ENCODE measurements at regions of chr5 and their contacts with region 1.

Region 1: GRCh38 chr5:56909294-56910209 is at the start of gene SETD9:
- DNase-seq: peak; percentile 99
- H3K4me3 ChIP-seq: peak within 1 kb of the TSS; percentile 65 to 88 (median 73)
- H3K27ac ChIP-seq: peak within 1 kb of the TSS; percentile 96 to 99 (median 98)
- H3K4me1 ChIP-seq: peaks cover 11 to 17% (median 12%) of the 10 kb centered on the region in 4 donors
- H3K27me3 ChIP-seq: no peaks in the 10 kb centered on the region
- CTCF ChIP-seq: no peak
- EP300 ChIP-seq: no peak
- POLR2A ChIP-seq: peak; percentile 89
- total RNA-seq, gene SETD9: 26.6 to 27.9 TPM in 2 of 4 donors, not detected in the others

Region 2: GRCh38 chr5:56350598-56351170 is 558.9 kb before region 1 on chr5:
- in situ Hi-C with region 1: no loop called
- intact Hi-C with region 1: no loop called
- DNase-seq: peak; percentile 25
- H3K4me3 ChIP-seq: no peak overlapping the region
- H3K27ac ChIP-seq: no peak overlapping the region
- H3K4me1 ChIP-seq: peaks cover 0 to 8% (median 0%) of the 10 kb centered on the region in 4 donors
- H3K27me3 ChIP-seq: no peaks in the 10 kb centered on the region
- CTCF ChIP-seq: no peak
- EP300 ChIP-seq: no peak
- POLR2A ChIP-seq: no peak

Region 3: GRCh38 chr5:56816541-56817081 is 92.9 kb before region 1 on chr5:
- in situ Hi-C with region 1: no loop called
- intact Hi-C with region 1: no loop called
- DNase-seq: peak; percentile 75
- H3K4me3 ChIP-seq: peak overlapping the region; percentile 69 to 96 (median 79)
- H3K27ac ChIP-seq: peak overlapping the region; percentile 91 to 99 (median 96)
- H3K4me1 ChIP-seq: peaks cover 6 to 25% (median 10%) of the 10 kb centered on the region in 4 donors
- H3K27me3 ChIP-seq: no peaks in the 10 kb centered on the region
- CTCF ChIP-seq: peak in 1 of 5 experiments; percentile 5
- EP300 ChIP-seq: no peak
- POLR2A ChIP-seq: no peak

Region 4: DNA sequence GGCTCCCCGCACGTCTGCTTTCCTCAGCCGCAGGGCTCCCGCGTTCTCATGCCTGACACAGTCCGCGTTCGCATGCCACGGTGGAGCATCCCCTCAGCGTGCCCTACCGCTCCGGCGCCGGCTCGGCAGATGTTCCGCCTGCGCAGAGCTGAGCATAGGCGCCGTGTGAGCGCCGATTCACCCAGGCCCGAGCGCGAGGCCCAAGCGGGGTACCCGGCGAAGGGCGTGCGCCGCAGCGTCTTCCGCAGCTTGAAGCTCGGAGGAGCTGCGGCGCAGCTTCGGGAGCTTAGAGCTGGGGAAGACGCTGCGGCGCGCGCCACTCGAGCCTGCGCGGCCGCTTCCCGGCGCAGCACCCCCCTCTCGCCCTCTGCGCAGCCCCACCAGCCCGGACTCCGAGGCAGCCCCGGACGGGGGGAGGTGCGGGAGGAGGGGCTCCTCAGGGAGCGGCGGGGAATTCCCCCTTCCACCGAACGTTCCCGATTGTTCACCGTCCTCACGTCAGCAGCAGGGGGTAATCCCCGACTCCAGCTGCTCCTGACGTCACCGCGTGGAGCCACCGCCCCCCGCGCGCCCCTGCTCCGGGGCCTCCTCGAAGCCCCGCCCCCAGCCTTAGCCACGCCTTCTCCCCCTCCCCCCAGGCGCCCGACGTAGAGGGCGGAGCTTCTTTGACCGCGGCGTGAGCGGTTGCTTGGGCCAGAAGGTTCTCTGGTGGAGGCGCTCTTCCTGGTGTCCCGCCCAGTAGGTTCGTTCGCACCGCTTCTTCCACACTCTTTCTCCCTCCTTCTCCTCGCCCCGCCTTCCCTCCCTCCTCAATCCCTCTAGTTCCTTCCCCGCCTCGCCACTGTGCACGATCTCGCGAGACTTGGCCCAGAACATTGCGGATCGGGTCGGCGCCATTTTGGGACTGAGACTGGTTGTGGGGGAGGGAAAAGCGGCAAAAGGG is 263.9 kb after region 1 on chr5 and contains the start of gene GPBP1:
- in situ Hi-C with region 1: no loop called
- intact Hi-C with region 1: loop called (anchors 1 kb)
- DNase-seq: peak; percentile 99
- H3K4me3 ChIP-seq: peak within 1 kb of the TSS; percentile 55 to 95 (median 84)
- H3K27ac ChIP-seq: peak within 1 kb of the TSS; percentile 95 to 100 (median 99)
- H3K4me1 ChIP-seq: peaks cover 0 to 32% (median 22%) of the 10 kb centered on the region in 4 donors
- H3K27me3 ChIP-seq: no peaks in the 10 kb centered on the region
- CTCF ChIP-seq: peak in 1 of 5 experiments; percentile 12
- EP300 ChIP-seq: peak; percentile 86
- POLR2A ChIP-seq: peak; percentile 83
- total RNA-seq, gene GPBP1: 36.7 to 95.1 (median 75.6) TPM

Region 5: DNA sequence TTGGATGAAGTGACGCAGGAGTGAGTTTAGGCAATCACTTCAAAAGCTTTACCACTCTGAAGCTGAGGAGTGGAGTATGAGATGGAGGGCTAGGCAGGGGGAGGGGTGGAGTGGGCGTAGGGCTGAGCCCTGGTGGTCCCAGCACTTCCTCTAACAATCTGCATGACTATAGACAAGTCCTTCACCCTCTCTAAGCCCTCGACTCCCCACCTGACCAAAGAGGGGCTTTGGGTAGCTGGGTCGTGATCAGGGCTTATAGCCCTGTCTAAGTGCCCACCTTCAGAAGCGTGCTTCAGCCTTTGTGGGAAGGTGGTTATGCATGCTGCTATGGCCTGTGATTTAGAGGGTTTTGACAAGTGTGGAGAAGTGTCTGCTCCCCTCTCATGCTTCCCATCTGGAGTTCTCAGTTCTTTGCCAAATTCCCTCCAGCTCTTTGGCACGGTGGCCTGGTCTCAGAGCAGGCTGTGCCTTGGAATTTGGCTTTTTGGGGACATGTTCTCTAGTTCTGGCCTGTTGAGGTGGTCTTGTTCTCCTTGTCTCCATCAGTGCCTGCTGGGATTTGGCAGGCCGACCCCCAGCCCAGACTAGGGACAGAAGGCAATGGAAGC is 520.1 kb after region 1 on chr5:
- in situ Hi-C with region 1: no loop called
- intact Hi-C with region 1: no loop called
- DNase-seq: no peak
- H3K4me3 ChIP-seq: no peak overlapping the region
- H3K27ac ChIP-seq: no peak overlapping the region
- H3K4me1 ChIP-seq: no peaks in the 10 kb centered on the region
- H3K27me3 ChIP-seq: no peaks in the 10 kb centered on the region
- CTCF ChIP-seq: no peak
- EP300 ChIP-seq: no peak
- POLR2A ChIP-seq: no peak

Measured in transverse colon (tissue), 4 donors.